Activated CD4-positive, alpha-beta memory T cell treated with anti-CD3 and anti-CD28 coated beads for 36 hours (primary cell): ENCODE measurements at regions of chr16 and their contacts with region 1.

Region 1: GRCh38 chr16:17194190-17194780 is 276.5 kb downstream of the XYLT1 start:
- DNase-seq: peak; percentile 69
- H3K4me3 Mint-ChIP-seq: no peak overlapping the region
- H3K27ac Mint-ChIP-seq: no peak overlapping the region
- H3K4me1 Mint-ChIP-seq: no peaks in the 10 kb centered on the region
- H3K27me3 Mint-ChIP-seq: no peaks in the 10 kb centered on the region

Region 2: DNA sequence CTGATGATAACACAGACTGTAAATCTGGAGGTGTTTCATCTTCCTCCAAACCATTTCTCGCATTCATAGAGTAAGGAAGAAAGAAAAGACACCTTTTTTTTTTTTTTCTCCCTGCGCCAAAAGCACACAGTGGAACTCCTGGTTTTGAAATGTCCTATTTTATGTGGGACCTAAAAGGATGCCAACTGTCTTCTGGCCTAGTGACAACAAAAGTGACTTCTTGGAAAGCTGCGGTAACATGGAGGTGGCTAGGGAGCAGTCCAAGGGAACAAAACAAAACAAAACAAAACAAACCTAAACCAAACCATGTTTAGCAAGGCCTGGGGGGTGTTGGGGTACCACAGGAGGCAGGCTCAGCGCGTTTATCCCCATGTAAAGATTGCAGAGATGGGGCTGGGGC is 101.7 kb after region 1 on chr16:
- CTCF ChIA-PET with region 1: no interaction called
- POLR2A ChIA-PET with region 1: no interaction called
- intact Hi-C with region 1: no loop called
- DNase-seq: no peak
- H3K4me3 Mint-ChIP-seq: no peak overlapping the region
- H3K27ac Mint-ChIP-seq: no peak overlapping the region
- H3K4me1 Mint-ChIP-seq: no peaks in the 10 kb centered on the region
- H3K27me3 Mint-ChIP-seq: no peaks in the 10 kb centered on the region

Region 3: GRCh38 chr16:17578921-17579874 is 384.9 kb after region 1 on chr16:
- CTCF ChIA-PET with region 1: interaction called, 11 read pairs
- POLR2A ChIA-PET with region 1: no interaction called
- intact Hi-C with region 1: no loop called
- DNase-seq: peak; percentile 60
- H3K4me3 Mint-ChIP-seq: no peak overlapping the region
- H3K27ac Mint-ChIP-seq: no peak overlapping the region
- H3K4me1 Mint-ChIP-seq: peaks cover 3% of the 10 kb centered on the region
- H3K27me3 Mint-ChIP-seq: peaks cover 6% of the 10 kb centered on the region